AG04449 (cell line): ENCODE measurements at regions of chr6 and their contacts with region 1.

Region 1: DNA sequence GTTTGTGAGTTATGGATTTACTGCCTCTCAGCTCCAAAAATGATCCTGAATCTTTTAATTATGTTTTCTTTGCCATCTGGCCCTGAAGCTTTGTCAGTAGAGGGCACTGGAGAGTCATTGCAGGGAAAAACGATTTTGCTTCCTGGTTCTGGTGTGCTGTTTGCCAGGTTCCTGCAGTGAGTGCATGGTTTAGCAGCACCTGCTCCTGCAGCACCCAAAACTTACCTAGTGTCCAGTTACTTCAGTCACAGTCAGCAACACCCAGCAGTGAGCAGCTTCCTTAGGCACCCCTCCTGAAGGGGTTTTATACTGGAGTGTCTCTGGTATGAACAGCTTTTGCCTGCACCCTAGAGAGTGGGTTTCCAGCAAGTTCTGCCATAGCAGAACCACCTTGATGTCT is 6.0 kb upstream of the TRIM26 start:
- DNase-seq: no peak
- H3K4me3 ChIP-seq: no peak overlapping the region
- CTCF ChIP-seq: peak; percentile 75

Region 2: DNA sequence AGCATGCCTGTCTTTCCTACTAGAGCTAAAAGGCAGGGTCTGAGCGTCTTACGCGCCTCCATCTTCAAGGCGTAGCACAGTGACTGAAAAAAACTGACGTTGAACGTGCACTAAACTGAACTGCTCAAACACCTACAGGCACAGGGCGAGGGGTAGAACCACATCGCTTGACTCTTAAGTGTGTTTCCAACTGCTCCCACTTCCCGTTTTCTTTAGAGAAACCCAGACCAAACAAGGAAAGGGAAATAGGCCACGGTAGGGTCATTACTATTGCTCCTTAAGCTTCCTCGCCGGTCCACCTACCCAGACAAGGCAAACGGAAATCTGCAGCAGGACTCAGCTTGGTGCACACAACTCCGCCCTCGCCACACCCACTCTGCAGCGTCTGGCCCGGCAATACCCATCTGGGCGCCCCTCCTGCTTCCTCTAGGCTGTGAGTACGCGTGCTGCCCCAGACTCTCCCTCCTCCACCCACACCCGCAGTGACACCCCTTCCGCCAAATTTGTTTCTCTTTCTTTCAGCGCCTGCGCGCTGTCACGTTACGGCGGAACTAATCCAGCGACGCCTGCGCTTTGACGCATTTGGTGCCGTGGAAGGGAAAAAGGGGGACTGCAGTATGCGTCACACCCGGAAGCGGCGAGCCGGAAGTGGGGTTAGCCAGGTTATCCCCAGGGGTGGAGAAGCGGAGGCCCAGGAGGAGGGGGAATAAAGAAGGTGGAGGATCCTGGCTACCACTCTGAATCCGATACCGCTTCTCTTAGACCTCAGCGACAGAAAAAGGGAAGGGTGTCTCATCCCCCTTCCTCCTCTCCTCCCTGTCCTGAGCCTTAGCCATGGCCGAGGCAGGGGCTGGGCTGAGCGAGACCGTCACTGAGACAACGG is 152.4 kb before region 1 on chr6 and contains the start of gene PPP1R11:
- CTCF ChIA-PET with region 1: no interaction called
- POLR2A ChIA-PET with region 1: no interaction called
- DNase-seq: peak; percentile 90
- H3K4me3 ChIP-seq: peak within 1 kb of the TSS; percentile 77
- CTCF ChIP-seq: no peak

Region 3: DNA sequence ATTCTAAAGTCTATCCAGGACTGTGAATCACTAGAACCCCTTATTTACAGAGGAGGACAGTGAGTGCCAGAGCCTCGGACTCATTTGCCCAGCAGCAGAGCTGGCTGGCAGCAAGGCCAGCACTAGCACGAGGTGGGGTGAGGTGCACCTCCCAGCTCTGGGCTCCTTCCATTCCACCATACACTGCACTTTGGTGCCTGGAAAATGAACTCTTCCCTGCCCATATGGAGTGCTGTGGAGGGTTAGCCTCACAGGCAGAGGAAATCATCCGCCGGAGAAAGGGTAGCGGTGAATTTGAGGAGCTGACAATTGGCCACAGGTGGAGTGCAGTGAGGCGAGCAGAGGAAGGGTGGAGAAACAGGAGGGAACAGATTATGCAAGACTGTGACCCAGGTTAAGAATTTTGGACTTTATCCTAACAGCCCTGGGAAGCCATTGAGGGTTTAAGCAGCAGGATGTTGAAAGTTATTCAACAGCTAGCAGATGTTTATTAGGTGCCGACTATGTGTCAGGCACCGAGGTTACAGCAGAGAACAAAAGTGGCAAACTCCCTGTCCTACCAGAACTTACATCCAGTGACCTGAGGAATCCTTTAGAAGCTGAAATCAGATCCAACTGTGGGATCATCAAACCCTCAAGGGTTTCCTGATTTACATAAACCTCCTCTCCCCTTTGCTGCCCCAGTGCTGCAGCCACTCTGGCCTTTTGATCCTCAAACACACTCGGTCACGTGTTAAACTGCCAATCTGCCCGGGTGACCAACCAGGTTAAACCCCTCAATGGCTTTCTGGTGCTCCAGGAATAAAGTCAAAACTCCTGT is 12.2 kb before region 1 on chr6:
- CTCF ChIA-PET with region 1: interaction called, 35 read pairs
- POLR2A ChIA-PET with region 1: no interaction called
- DNase-seq: no peak
- H3K4me3 ChIP-seq: no peak overlapping the region; the same call in 1 of the 2 replicates
- CTCF ChIP-seq: no peak

Region 4: DNA sequence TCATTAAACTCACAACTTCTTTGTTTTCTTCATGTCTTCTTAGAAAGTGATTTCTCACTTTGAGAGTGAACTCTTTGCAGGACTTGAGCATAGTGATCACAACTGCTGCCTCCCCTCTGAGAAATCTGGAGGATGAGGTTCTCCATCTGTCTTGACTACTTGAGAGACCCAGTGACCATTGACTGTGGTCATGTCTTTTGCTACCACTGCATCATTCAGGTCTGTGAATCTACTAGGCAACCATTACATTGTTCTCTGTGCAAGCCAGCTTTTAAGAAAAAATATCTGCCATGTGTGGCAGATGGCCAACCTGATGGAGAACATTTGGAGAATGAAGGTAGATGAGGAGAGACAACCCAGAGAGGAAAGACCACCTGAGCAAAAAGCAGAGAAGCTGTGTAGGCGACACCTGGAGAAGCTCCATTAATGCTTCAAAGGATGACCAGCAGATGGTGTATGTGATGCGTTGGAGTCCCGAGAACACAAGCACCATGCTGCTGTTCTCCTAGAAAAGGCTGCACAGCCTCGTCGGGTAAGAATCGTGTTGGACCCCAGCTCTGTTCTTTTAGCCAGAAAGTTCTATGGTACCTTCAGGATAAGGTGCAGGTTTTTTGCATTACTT is 19.0 kb after region 1 on chr6:
- CTCF ChIA-PET with region 1: interaction called, 10 read pairs
- POLR2A ChIA-PET with region 1: no interaction called
- DNase-seq: no peak
- H3K4me3 ChIP-seq: no peak overlapping the region
- CTCF ChIP-seq: peak; percentile 33

Region 5: DNA sequence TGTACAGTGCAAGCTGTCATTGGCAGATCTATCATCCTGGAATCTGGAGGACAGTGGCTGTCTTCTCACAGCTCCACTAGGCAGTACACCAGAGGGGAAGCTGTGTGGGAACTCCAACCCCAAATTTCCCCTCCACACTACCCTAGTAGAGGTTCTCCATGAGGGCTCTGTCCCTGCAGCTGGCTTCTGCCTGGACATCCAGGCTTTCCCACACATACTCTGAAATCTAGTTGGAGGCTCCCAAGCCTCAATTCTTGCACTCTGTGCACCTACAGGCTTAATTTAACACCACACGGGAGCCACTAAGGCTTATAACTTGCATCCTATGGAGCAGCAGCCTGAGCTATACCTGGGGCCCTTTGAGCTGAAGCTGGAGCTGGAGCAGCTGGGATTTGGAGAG is 64.5 kb after region 1 on chr6:
- CTCF ChIA-PET with region 1: no interaction called
- POLR2A ChIA-PET with region 1: no interaction called
- DNase-seq: no peak
- H3K4me3 ChIP-seq: no peak overlapping the region
- CTCF ChIP-seq: no peak